CD8-positive, alpha-beta T cell (primary cell): ENCODE measurements at regions of chr10 and their contacts with region 1.

Region 1: DNA sequence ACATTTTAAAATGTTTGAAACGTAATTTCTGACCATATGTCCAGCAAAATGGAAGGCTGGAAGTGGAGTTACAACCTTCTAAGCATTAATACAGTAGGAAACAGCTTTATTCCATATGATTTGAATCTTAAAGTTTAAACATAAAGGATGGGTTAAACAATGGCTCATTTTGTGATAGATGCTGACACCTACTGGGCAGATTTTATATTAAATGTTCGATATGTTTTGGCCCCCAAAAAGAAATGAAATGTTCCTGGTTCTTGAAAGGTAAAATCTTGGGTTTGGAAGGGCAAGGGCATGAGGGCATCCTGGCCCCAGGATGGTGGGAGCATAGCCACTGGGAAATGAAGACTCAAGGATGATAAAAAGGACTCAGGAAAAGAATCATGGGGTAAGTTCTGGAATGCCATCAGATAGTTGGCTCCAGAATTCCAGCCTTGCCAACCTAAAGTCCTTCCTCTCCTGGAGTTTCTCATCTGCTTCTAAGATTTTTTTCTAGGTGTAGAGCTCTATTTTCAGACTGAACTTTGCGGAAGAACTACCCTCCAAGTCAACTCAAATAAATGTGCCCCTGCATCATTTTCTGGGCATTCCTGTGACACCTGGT is 34.6 kb upstream of the SLC35G1 start:
- DNase-seq: peak in 2 of 9 experiments; percentile 7 to 22
- ATAC-seq: no peak
- H3K4me3 ChIP-seq: no peak overlapping the region
- H3K4me3 Mint-ChIP-seq: no peak overlapping the region
- H3K27ac ChIP-seq: no peak overlapping the region
- H3K27ac Mint-ChIP-seq: no peak overlapping the region
- H3K4me1 ChIP-seq: no peaks in the 10 kb centered on the region
- H3K4me1 Mint-ChIP-seq: no peaks in the 10 kb centered on the region
- H3K27me3 ChIP-seq: no peaks in the 10 kb centered on the region
- H3K27me3 Mint-ChIP-seq: peaks cover 3% of the 10 kb centered on the region
- CTCF ChIP-seq: no peak

Region 2: DNA sequence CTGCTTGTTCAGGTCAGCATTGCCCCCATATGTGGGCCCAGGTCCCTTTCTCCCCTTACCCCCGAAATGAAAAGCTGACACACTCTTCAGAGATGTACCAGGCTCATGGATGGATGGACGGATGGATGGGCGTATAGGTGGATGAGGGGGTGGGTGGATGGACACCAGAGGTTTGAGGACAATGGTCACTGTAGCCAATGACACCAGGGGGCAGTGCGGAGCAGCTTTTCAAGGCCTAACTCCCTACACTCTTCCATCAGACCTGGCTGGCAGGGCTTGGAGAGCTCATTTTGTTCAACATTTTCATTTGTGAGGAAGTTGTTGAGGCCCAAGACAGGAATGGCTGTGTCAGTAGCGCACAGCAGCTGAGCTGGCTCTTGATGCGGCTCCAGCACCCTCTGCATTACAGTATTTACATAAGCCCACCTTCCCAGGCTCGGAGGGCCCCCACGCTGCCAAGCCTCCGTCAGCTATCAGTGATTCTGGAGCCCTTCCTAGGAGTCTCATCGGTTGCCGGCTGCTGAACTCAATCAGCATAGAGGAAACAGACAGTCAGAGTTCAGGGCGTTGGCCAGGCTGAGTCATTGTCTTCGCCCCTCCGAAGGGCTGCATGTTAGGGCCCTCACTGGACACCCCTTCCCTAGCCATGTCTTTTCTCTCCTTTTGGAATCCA is 304.3 kb before region 1 on chr10:
- CTCF ChIA-PET with region 1: no interaction called
- POLR2A ChIA-PET with region 1: no interaction called
- intact Hi-C with region 1: loop called in 1 of 2 experiments (anchors 2 kb)
- DNase-seq: peak in 7 of 9 experiments; percentile 19 to 55 (median 31)
- ATAC-seq: no peak
- H3K4me3 ChIP-seq: no peak overlapping the region
- H3K4me3 Mint-ChIP-seq: no peak overlapping the region
- H3K27ac ChIP-seq: no peak overlapping the region
- H3K27ac Mint-ChIP-seq: no peak overlapping the region
- H3K4me1 ChIP-seq: no peaks in the 10 kb centered on the region
- H3K4me1 Mint-ChIP-seq: no peaks in the 10 kb centered on the region
- H3K27me3 ChIP-seq: no peaks in the 10 kb centered on the region
- H3K27me3 Mint-ChIP-seq: peaks cover 14% of the 10 kb centered on the region
- CTCF ChIP-seq: peak; percentile 42

Region 3: DNA sequence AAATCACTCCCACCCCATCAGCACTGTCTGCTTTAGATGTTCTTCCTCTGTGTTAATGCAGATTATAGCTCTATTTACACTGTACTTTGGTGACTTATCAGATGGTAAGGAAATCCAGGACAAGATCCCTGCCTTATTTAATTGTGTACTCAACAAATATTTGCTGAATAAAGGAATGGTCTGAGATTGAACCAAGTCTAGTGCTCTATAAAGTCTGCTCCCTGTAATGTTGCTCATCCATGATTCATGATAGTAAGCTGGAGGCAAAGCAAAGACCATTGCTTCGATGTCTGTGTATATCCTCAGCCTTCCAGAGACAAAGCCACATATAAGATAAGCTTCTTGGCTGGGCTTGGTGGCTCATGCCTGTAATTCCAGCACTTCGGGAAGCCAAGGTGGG is 168.0 kb after region 1 on chr10:
- CTCF ChIA-PET with region 1: no interaction called
- POLR2A ChIA-PET with region 1: no interaction called
- intact Hi-C with region 1: no loop called
- DNase-seq: no peak
- ATAC-seq: no peak
- H3K4me3 ChIP-seq: no peak overlapping the region
- H3K4me3 Mint-ChIP-seq: no peak overlapping the region
- H3K27ac ChIP-seq: no peak overlapping the region
- H3K27ac Mint-ChIP-seq: no peak overlapping the region
- H3K4me1 ChIP-seq: no peaks in the 10 kb centered on the region
- H3K4me1 Mint-ChIP-seq: no peaks in the 10 kb centered on the region
- H3K27me3 ChIP-seq: no peaks in the 10 kb centered on the region
- H3K27me3 Mint-ChIP-seq: peaks cover 5% of the 10 kb centered on the region
- CTCF ChIP-seq: no peak